Right ventricle myocardium inferior (tissue), 1 donor: ENCODE measurements at regions of chr9 and their contacts with region 1.

Region 1: DNA sequence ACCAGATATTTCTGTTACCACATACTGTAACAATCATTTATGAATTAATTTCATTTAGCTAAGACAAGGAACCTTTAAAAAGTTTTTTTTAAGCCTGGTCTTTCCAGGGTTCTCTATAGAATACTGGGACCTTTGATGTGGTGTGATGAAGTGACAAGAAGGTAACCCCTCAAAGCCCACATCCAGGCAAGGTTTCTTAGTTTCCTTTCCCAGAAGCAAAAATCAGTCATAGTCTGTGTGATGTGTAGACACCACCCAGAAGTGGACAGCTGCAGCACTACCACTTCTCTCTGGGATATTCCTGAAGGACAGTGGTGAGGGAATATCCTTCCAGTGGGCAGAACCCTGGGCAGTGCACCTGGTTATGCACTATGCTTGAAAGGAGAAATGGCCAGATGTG is 115.6 kb downstream of the TTC39B start:
- DNase-seq: no peak
- ATAC-seq: no peak

Region 2: GRCh38 chr9:14585730-14586473 is 605.5 kb before region 1 on chr9:
- intact Hi-C with region 1: no loop called
- DNase-seq: no peak
- ATAC-seq: no peak

Region 3: DNA sequence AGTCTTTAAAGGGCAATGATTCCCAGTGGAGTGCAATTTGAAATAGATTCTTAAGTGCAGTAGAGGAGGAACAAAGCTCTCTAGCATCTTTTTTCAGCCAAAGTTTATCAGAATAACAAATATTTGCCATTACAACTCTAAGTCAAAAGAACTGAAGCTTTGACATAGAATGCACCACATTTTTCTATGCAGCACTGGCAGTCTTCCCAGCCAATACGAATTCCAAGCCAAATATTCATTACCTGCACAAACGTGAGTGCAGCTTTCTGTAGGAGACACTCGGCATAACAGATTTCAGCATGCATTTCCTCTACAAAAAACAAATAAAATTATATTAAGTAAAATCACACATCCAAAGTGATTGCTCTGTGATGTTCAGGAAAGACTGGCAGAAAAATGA is 12.2 kb after region 1 on chr9:
- intact Hi-C with region 1: loop called (anchors 1 kb)
- DNase-seq: no peak
- ATAC-seq: no peak